Activated CD8-positive, alpha-beta T cell treated with anti-CD3 and anti-CD28 coated beads for 36 hours (primary cell): ENCODE measurements at regions of chr13 and their contacts with region 1.

Region 1: GRCh38 chr13:45367358-45367757 is 26.4 kb upstream of the TPT1 start:
- DNase-seq: peak; percentile 98
- ATAC-seq: peak; percentile 99
- H3K4me3 Mint-ChIP-seq: peak overlapping the region; percentile 46
- H3K27ac Mint-ChIP-seq: peak overlapping the region; percentile 97
- H3K4me1 Mint-ChIP-seq: peaks cover 62% of the 10 kb centered on the region
- H3K27me3 Mint-ChIP-seq: no peaks in the 10 kb centered on the region
- CTCF ChIP-seq: no peak

Region 2: GRCh38 chr13:45356966-45357672 is 10.2 kb before region 1 on chr13:
- CTCF ChIA-PET with region 1: interaction called, 10 read pairs
- POLR2A ChIA-PET with region 1: interaction called, 3 read pairs
- intact Hi-C with region 1: no loop called
- DNase-seq: no peak
- ATAC-seq: peak; percentile 58
- H3K4me3 Mint-ChIP-seq: no peak overlapping the region
- H3K27ac Mint-ChIP-seq: peak overlapping the region; percentile 70
- H3K4me1 Mint-ChIP-seq: peaks cover 21% of the 10 kb centered on the region
- H3K27me3 Mint-ChIP-seq: no peaks in the 10 kb centered on the region
- CTCF ChIP-seq: no peak

Region 3: DNA sequence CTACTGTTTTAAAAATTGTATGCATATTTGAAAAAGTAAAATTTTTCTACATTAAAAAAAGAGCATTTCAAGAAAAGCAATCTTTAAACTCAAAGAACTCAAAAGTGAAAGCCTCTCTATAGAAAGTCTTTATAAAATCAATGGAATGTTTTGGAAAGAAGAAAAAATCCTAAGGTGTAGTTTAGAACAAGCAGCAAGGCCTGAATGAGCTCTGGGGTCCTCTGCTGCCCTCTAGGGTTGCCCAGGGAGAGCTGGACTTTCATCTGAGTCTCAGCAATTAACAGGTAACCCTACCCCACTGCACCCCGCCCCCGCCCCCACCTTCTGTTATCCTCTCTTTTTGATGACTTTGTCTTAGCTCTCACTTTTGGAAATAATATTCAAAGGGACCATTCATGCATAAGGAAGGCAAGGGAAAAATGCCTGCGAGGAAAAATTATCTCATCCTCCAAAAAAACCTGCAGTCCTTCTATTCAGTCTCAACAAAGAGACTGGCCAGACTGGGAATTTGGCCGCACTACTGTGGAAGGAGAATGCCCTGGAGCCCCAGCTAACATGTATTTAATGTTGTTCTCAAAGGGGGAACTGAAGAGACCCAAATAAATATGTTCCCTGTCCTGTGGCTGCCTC is 26.7 kb after region 1 on chr13:
- CTCF ChIA-PET with region 1: interaction called, 103 read pairs
- POLR2A ChIA-PET with region 1: interaction called, 11 read pairs
- intact Hi-C with region 1: no loop called
- DNase-seq: peak; percentile 63
- ATAC-seq: no peak
- H3K4me3 Mint-ChIP-seq: no peak overlapping the region
- H3K27ac Mint-ChIP-seq: no peak overlapping the region
- H3K4me1 Mint-ChIP-seq: peaks cover 44% of the 10 kb centered on the region
- H3K27me3 Mint-ChIP-seq: no peaks in the 10 kb centered on the region
- CTCF ChIP-seq: peak; percentile 74

Region 4: DNA sequence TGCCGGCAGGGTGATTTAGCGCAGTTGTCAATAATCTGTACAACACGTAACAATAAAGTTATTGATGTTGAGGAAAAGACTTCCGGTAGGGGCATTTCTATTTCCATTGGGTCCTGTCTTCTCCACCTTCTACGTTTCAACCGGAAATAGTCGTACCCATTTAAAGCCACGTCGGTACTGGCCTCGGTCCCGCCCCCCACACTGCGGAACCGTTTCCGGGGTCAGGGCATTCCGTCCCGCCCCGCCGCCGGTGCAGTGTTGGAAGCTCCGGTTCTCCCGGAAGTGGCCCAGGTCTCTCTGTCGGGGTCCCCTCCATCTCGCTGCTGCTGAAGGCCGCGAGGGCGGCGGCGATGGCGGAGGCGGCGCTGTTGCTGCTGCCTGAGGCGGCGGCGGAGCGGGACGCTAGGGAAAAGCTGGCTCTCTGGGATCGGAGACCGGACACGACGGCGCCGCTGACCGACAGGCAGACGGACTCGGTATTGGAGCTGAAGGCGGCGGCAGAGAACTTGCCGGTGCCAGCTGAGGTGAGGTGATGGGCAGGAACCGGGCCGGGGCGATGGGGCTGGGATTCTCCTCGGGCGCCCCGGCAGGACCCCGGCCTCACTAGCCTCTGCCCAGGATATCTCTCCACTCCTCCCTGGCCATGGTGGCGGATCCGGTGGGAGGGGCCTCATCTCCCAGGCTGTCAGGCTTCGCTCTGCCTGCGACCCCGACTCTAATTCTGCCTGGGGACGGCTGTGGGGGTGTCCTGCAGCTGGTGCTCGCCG is 97.5 kb after region 1 on chr13 and contains the start of gene COG3:
- CTCF ChIA-PET with region 1: interaction called, 14 read pairs
- POLR2A ChIA-PET with region 1: interaction called, 4 read pairs
- intact Hi-C with region 1: no loop called
- DNase-seq: peak; percentile 97
- ATAC-seq: peak; percentile 98
- H3K4me3 Mint-ChIP-seq: peak within 1 kb of the TSS; percentile 93
- H3K27ac Mint-ChIP-seq: peak within 1 kb of the TSS; percentile 95
- H3K4me1 Mint-ChIP-seq: peaks cover 43% of the 10 kb centered on the region
- H3K27me3 Mint-ChIP-seq: no peaks in the 10 kb centered on the region
- CTCF ChIP-seq: no peak
- total RNA-seq, gene COG3: 19.9 to 22.1 TPM

Region 5: DNA sequence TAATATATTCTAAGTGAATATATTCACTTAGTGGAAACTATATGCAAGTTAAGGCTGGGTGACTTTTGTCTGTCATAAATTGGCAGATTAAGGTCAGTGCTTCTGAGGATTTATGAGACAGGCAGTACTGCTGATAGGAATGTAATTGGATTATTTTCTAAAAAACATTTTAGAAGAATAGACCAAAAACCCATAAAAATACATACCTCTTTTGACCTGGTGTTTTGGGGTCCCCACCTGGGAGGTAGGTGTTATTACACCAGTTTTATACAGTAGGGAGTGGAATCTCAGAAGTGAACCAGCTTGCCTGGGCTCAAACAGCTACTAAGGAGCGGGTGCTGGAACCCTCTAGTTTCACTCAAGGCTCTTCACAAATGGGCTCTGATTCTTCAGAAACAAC is 122.7 kb after region 1 on chr13:
- CTCF ChIA-PET with region 1: interaction called, 25 read pairs
- POLR2A ChIA-PET with region 1: no interaction called
- intact Hi-C with region 1: loop called (anchors 5 kb)
- DNase-seq: peak; percentile 20
- ATAC-seq: peak; percentile 79
- H3K4me3 Mint-ChIP-seq: no peak overlapping the region
- H3K27ac Mint-ChIP-seq: no peak overlapping the region
- H3K4me1 Mint-ChIP-seq: no peaks in the 10 kb centered on the region
- H3K27me3 Mint-ChIP-seq: no peaks in the 10 kb centered on the region
- CTCF ChIP-seq: peak; percentile 63